WTC11 (cell line): ENCODE measurements at regions of chr22 and their contacts with region 1.

Region 1: DNA sequence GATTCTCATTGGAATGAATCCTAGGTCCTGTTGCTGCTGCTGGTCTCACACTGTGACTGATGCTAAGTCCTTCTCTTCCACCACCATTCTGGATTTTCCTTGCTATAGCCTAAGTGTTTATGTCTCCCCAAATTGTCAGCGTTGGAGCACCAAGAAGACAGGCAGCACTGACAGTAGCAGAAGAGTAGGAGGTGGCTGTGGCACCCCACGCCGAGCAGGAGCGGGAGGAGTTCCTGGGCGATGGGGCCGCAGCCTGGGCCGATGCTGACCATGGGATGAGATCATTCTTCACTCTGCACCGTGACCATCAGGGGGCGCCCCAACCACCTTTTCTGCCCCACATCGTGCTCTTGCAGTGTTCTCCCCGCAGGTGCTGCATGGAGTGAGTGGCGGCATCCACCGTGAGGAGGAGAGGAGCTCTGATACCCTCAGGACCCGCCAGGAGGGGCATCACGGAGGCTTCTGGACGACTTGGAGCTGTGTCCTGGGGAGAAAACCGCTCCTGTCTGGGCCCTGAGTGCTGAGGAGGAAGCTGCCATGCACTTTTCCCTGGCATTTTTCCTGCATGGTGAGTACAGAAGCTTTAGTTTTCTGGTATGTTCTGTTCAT is 57.0 kb downstream of the LRRC74B start:
- DNase-seq: peak; percentile 95
- ATAC-seq: peak; percentile 99
- H3K4me3 Mint-ChIP-seq: peak overlapping the region; percentile 51
- H3K27ac Mint-ChIP-seq: no peak overlapping the region
- H3K4me1 Mint-ChIP-seq: peaks cover 22% of the 10 kb centered on the region
- H3K27me3 Mint-ChIP-seq: peaks cover 21% of the 10 kb centered on the region
- CTCF ChIP-seq: peak; percentile 82

Region 2: GRCh38 chr22:20957316-20958101 is 145.3 kb before region 1 on chr22:
- CTCF ChIA-PET with region 1: interaction called, 29 read pairs
- POLR2A ChIA-PET with region 1: no interaction called
- DNase-seq: peak; percentile 58
- ATAC-seq: peak; percentile 74
- H3K4me3 Mint-ChIP-seq: peak overlapping the region; percentile 74
- H3K27ac Mint-ChIP-seq: no peak overlapping the region
- H3K4me1 Mint-ChIP-seq: peaks cover 12% of the 10 kb centered on the region
- H3K27me3 Mint-ChIP-seq: peaks cover 18% of the 10 kb centered on the region
- CTCF ChIP-seq: no peak

Region 3: GRCh38 chr22:20973634-20974286 is 129.0 kb before region 1 on chr22:
- CTCF ChIA-PET with region 1: no interaction called
- POLR2A ChIA-PET with region 1: no interaction called
- DNase-seq: no peak
- ATAC-seq: no peak
- H3K4me3 Mint-ChIP-seq: no peak overlapping the region
- H3K27ac Mint-ChIP-seq: no peak overlapping the region
- H3K4me1 Mint-ChIP-seq: 0 out of 2 replicates have a peak, but pooled peaks cover 3% of the 10 kb centered on the region
- H3K27me3 Mint-ChIP-seq: peaks cover 37% of the 10 kb centered on the region
- CTCF ChIP-seq: no peak

Region 4: GRCh38 chr22:20990184-20991180 is 112.3 kb before region 1 on chr22:
- CTCF ChIA-PET with region 1: no interaction called
- POLR2A ChIA-PET with region 1: no interaction called
- DNase-seq: no peak
- ATAC-seq: no peak
- H3K4me3 Mint-ChIP-seq: no peak overlapping the region
- H3K27ac Mint-ChIP-seq: peak overlapping the region; percentile 63; the same call in 1 of the 2 replicates
- H3K4me1 Mint-ChIP-seq: no peaks in the 10 kb centered on the region
- H3K27me3 Mint-ChIP-seq: no peaks in the 10 kb centered on the region
- CTCF ChIP-seq: no peak

Region 5: GRCh38 chr22:21014202-21014725 is 88.5 kb before region 1 on chr22:
- CTCF ChIA-PET with region 1: interaction called, 19 read pairs
- POLR2A ChIA-PET with region 1: no interaction called
- DNase-seq: peak; percentile 97
- ATAC-seq: peak; percentile 90
- H3K4me3 Mint-ChIP-seq: peak overlapping the region; percentile 85
- H3K27ac Mint-ChIP-seq: peak overlapping the region; percentile 89; the same call in 1 of the 2 replicates
- H3K4me1 Mint-ChIP-seq: peaks cover 36% of the 10 kb centered on the region
- H3K27me3 Mint-ChIP-seq: peaks cover 21% of the 10 kb centered on the region
- CTCF ChIP-seq: no peak

Region 6: GRCh38 chr22:21045585-21046294 is 57.0 kb before region 1 on chr22 and contains the start of gene LRRC74B:
- CTCF ChIA-PET with region 1: interaction called, 15 read pairs
- POLR2A ChIA-PET with region 1: no interaction called
- DNase-seq: peak; percentile 97
- ATAC-seq: peak; percentile 96
- H3K4me3 Mint-ChIP-seq: peak within 1 kb of the TSS; percentile 89
- H3K27ac Mint-ChIP-seq: no peak within 1 kb of the TSS
- H3K4me1 Mint-ChIP-seq: peaks cover 11% of the 10 kb centered on the region
- H3K27me3 Mint-ChIP-seq: peaks cover 23% of the 10 kb centered on the region
- CTCF ChIP-seq: no peak
- total RNA-seq, gene LRRC74B: not detected in 3 replicates

Region 7: DNA sequence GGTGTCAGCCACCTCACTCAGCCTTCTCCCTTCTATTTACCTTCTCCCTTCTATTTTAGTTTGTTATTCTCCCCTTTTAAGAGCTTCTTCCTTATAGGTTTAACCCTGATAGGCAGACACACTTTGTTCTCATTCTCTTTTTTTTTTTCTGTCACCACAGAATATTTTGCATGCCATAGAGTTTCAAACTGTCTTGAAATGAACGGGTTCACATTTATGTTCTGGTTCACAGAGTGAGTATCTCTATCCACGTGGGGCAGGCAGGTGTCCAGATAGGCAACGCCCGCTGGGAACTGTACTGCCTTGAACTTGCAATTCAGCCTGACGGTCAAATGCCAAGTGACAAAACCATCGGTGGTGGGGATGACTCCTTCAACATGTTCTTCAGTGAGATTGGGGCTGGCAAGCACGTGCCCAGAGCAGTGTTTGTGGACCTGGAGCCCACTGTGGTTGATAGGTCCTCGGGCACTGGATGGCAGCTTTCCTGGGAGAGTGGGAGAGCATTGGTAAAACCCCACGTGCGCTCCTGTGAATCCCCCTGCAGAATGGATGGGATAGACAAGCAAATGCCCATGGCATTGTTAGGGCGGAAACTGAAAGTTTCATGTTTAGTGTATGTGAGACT is 37.4 kb before region 1 on chr22:
- CTCF ChIA-PET with region 1: interaction called, 11 read pairs
- POLR2A ChIA-PET with region 1: no interaction called
- DNase-seq: no peak
- ATAC-seq: no peak
- H3K4me3 Mint-ChIP-seq: no peak overlapping the region
- H3K27ac Mint-ChIP-seq: no peak overlapping the region
- H3K4me1 Mint-ChIP-seq: no peaks in the 10 kb centered on the region
- H3K27me3 Mint-ChIP-seq: no peaks in the 10 kb centered on the region
- CTCF ChIP-seq: no peak

Region 8: DNA sequence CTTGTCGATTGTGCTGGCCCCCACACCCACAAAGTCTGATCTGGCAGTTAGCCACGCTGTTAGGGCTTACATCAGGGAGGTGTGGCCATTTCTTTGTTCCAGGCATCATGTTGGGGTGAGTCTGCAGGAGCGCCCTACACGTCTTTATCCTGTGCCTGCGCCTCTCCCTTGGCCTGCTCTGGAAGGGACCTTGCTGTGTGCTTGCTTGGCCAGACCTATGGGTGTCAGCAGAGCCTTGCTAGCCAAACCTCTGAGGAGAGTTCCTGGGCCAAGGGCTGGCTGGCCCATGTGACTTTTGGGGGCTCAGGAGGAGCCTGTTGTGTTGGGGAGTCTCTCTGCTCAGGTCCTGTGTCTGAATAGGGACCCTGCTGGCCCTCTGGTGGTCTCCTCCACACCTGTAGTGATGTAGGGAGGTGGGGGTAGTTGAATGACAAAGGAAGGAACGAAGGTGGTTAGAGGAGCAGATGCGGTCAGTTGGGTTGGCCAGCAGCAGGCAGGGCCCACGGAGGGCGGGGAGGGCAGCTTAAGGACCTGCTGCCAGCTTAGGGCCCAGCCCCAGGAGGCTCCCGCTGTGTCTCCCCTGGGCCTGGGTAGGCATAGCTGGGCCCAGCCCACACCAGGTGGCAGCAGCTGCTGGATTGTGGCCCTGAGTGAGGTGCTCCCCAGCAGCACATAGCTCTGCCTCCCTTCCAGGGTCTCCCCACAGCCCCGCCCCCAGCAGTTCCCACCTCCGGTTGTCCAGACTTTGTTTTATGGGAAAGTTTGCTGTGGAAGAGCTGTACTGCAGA is 571.0 kb after region 1 on chr22:
- CTCF ChIA-PET with region 1: no interaction called
- POLR2A ChIA-PET with region 1: no interaction called
- DNase-seq: no peak
- ATAC-seq: no peak
- H3K4me3 Mint-ChIP-seq: no peak overlapping the region
- H3K27ac Mint-ChIP-seq: no peak overlapping the region
- H3K4me1 Mint-ChIP-seq: peaks cover 3% of the 10 kb centered on the region; the same call in 1 of the 2 replicates
- H3K27me3 Mint-ChIP-seq: no peaks in the 10 kb centered on the region
- CTCF ChIP-seq: no peak